ENCODE measurements at regions of chr6 and their contacts with region 1.

Region 1: GRCh38 chr6:36196880-36197548 is 470 bp downstream of the BRPF3 start:
- DNase-seq: peak; percentile 100
- ATAC-seq: peak; percentile 96
- H3K4me3 ChIP-seq: peak overlapping the region; percentile 67
- H3K27ac ChIP-seq: peak overlapping the region; percentile 92
- H3K4me1 ChIP-seq: peaks cover 18% of the 10 kb centered on the region
- H3K27me3 ChIP-seq: no peaks in the 10 kb centered on the region
- CTCF ChIP-seq: no peak

Region 2: GRCh38 chr6:36052097-36052496 is 144.9 kb before region 1 on chr6:
- intact Hi-C with region 1: no loop called
- DNase-seq: no peak
- ATAC-seq: no peak
- H3K4me3 ChIP-seq: no peak overlapping the region
- H3K27ac ChIP-seq: no peak overlapping the region
- H3K4me1 ChIP-seq: peaks cover 23% of the 10 kb centered on the region
- H3K27me3 ChIP-seq: no peaks in the 10 kb centered on the region
- CTCF ChIP-seq: no peak

Region 3: GRCh38 chr6:36075656-36076055 is 121.4 kb before region 1 on chr6:
- intact Hi-C with region 1: no loop called
- DNase-seq: no peak
- ATAC-seq: peak; percentile 47
- H3K4me3 ChIP-seq: no peak overlapping the region
- H3K27ac ChIP-seq: no peak overlapping the region
- H3K4me1 ChIP-seq: no peaks in the 10 kb centered on the region
- H3K27me3 ChIP-seq: no peaks in the 10 kb centered on the region
- CTCF ChIP-seq: peak; percentile 10

Region 4: GRCh38 chr6:36131511-36132245 is 65.3 kb before region 1 on chr6:
- intact Hi-C with region 1: loop called (anchors 10 kb)
- DNase-seq: peak; percentile 75
- ATAC-seq: peak; percentile 35
- H3K4me3 ChIP-seq: peak overlapping the region; percentile 59
- H3K27ac ChIP-seq: peak overlapping the region; percentile 86
- H3K4me1 ChIP-seq: peaks cover 37% of the 10 kb centered on the region
- H3K27me3 ChIP-seq: no peaks in the 10 kb centered on the region
- CTCF ChIP-seq: no peak